Right ventricle myocardium inferior (tissue), 1 donor: ENCODE measurements at regions of chr12 and their contacts with region 1.

Region 1: GRCh38 chr12:66688846-66689439 is 10.1 kb upstream of the GRIP1 start:
- DNase-seq: no peak
- ATAC-seq: peak; percentile 72

Region 2: GRCh38 chr12:66379616-66380015 is 309.3 kb before region 1 on chr12:
- intact Hi-C with region 1: no loop called
- DNase-seq: no peak
- ATAC-seq: no peak

Region 3: GRCh38 chr12:66409195-66409871 is 279.6 kb before region 1 on chr12:
- intact Hi-C with region 1: no loop called
- DNase-seq: no peak
- ATAC-seq: peak; percentile 39

Region 4: GRCh38 chr12:66744956-66745383 is 56.0 kb after region 1 on chr12:
- intact Hi-C with region 1: no loop called
- DNase-seq: no peak
- ATAC-seq: no peak

Region 5: DNA sequence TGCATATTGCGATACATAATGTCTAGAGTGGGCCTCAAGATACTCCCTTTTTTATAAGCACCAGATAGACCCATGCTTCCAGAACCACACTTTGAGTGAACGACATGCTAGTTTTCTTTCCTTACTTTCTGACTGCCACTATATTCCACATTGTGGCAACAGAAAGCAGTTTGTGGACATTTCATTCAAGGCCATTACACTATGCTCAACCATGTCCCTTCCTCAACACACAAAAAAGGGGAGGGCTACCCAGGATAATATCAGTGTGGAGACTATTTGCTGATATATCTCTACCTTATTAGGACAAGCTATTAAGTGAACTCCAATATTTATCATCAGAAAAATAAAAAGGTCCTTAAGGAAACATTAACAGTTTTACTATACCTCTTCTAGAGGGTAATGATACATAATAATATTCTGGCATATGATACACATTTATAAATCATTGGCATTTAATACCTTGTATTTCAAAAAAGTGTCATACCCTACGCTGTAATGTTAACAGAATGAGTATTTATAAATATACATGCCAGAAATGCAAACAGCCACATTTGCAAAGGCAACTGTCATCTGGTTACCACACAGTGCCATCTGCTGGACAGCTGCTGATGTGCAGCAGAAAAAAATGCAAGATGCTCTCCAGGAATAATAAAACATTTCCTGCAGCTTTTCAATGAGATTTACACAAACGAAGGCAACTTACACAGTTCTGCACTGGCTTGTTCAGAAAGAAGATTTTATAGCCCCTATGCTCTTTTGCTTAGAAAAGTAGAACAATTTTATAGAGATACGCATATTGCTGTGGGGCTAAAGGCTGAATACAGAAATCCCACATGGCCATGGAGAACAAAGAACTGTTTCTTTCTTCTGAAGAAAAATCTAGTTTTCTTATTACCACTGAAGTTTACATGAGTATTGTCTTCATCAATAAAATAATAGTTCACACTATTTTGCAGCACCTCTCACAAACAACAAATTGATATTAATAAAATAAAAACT is 172.1 kb after region 1 on chr12:
- intact Hi-C with region 1: loop called (anchors 1 kb)
- DNase-seq: no peak
- ATAC-seq: no peak